ENCODE measurements at regions of chr6 and their contacts with region 1.

Region 1: DNA sequence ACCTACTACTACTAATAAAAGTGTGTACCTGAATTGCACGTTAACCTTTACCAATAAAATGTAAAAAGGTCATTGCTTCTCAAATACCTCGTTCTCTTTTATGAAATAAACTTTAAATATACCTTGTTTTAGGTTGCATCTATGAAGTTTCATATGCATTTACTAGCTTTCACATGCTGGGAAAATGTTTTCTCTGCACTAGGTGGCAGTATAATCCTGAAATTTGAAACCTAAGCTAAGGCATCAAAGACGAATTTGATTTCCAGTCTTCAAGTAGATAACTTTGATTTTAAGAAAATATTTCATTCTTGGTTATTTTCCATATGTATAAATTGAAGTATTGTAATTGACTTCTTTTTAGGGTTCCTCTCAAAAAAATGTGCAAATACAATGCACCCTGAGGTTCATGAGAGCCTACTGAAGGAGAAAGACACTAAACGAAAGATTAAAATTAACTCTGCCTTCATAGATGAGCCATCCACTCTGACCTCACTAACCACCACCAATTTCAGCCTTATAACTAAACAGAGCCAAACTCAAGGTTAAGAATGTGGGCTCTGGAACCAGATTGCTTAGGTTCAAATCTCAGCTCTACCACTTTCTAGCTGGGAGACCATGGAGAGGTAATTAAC is 7.3 kb upstream of the COL9A1 start:
- DNase-seq: peak; percentile 8
- H3K4me3 ChIP-seq: peak overlapping the region in 1 of 2 experiments; percentile 11; a peak in 1 of 4 replicates
- H3K27ac ChIP-seq: no peak overlapping the region
- H3K4me1 ChIP-seq: no peaks in the 10 kb centered on the region
- H3K27me3 ChIP-seq: peaks cover under 1% of the 10 kb centered on the region; the same call in 1 of the 2 replicates
- CTCF ChIP-seq: peak; percentile 83
- EP300 ChIP-seq: no peak
- RAD21 ChIP-seq: peak; percentile 82

Region 2: DNA sequence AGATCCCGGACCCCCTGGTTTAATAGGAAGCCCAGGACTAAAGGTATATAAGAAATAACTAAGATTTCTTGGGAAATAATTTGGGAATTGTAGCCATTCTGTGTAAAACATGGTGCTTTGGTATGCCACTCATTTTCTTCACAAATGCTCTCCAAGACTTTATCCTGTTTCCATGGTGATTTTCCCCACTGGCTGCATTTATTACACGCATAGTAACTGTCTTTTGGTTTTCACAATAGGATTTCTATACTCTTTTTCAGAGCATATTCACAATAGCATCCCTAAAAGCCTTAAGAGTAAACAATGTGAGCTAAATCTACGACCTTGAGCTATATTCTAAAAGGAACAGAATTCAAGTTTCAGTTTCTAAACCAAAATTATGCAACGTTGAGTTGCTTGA is 168.1 kb before region 1 on chr6:
- CTCF ChIA-PET with region 1: no interaction called
- POLR2A ChIA-PET with region 1: no interaction called
- DNase-seq: no peak
- H3K4me3 ChIP-seq: no peak overlapping the region
- H3K27ac ChIP-seq: no peak overlapping the region
- H3K4me1 ChIP-seq: no peaks in the 10 kb centered on the region
- H3K27me3 ChIP-seq: no peaks in the 10 kb centered on the region
- CTCF ChIP-seq: no peak
- EP300 ChIP-seq: no peak
- RAD21 ChIP-seq: no peak

Region 3: DNA sequence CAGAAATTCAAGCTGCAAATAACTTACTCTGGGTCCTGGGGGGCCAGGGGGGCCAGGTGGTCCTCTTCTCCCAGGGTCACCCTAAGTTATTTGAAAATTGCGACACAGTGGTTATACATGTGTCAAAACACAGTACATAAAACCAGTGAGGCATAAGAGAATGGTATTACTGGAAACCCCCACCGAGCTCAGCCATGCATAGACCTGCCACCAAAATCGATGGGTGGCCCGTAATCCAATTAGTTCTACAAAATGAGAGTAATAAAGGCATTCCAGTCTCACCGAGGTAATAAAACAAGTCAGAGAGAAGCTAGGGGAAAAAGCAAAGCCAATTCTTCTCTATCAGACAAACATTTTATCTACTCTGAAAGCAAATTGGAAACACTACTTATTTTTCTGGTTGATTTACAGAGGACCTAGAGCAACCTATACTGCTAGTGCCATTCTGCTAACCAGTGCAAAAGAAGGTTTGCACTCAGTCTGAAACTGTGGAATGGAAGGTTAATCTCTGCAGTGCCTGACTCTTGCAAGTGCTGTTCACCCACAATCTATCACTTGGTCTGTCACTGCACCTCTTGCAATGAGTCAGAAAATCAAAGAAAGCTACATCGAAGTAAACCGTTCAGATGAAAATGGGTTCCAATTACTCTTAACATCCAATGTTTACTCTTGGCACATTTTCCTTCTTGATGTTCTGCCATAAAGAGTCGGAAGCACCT is 39.7 kb before region 1 on chr6:
- CTCF ChIA-PET with region 1: interaction called, 13 read pairs
- POLR2A ChIA-PET with region 1: no interaction called
- DNase-seq: no peak
- H3K4me3 ChIP-seq: no peak overlapping the region
- H3K27ac ChIP-seq: no peak overlapping the region; a peak in 1 of 4 replicates
- H3K4me1 ChIP-seq: no peaks in the 10 kb centered on the region; a peak in 1 of 4 replicates
- H3K27me3 ChIP-seq: no peaks in the 10 kb centered on the region
- CTCF ChIP-seq: no peak
- EP300 ChIP-seq: no peak
- RAD21 ChIP-seq: no peak

Region 4: GRCh38 chr6:70299456-70299855 is 10.7 kb before region 1 on chr6:
- CTCF ChIA-PET with region 1: interaction called, 25 read pairs
- POLR2A ChIA-PET with region 1: no interaction called
- DNase-seq: no peak
- H3K4me3 ChIP-seq: no peak overlapping the region
- H3K27ac ChIP-seq: no peak overlapping the region
- H3K4me1 ChIP-seq: no peaks in the 10 kb centered on the region
- H3K27me3 ChIP-seq: no peaks in the 10 kb centered on the region; the same call in 1 of the 2 replicates
- CTCF ChIP-seq: no peak
- EP300 ChIP-seq: no peak
- RAD21 ChIP-seq: no peak

Region 5: GRCh38 chr6:70353343-70353913 is 43.2 kb after region 1 on chr6:
- CTCF ChIA-PET with region 1: interaction called, 15 read pairs
- POLR2A ChIA-PET with region 1: no interaction called
- DNase-seq: no peak
- H3K4me3 ChIP-seq: no peak overlapping the region
- H3K27ac ChIP-seq: no peak overlapping the region
- H3K4me1 ChIP-seq: peaks cover 0 to 4% of the 10 kb centered on the region in 2 experiments; a peak in 2 of 4 replicates
- H3K27me3 ChIP-seq: no peaks in the 10 kb centered on the region
- CTCF ChIP-seq: no peak
- EP300 ChIP-seq: no peak
- RAD21 ChIP-seq: no peak

Region 6: DNA sequence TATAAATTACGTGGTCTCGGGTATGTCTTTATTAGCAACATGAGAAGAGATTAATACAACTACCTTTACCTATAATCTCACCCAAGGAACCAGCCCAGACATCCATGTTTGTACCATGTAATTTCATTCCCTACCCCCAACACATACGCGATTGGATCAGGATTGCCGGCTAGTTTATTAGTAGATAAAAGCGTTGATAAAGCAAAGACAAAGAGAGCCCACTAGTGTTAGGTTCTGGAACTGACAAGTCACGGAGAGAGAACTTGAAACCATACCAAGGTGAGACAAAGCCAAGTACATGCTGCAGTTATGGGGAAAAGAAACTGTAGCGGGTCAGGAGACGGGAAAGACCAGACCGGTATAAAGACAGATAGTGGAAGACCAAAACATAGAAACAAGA is 65.7 kb after region 1 on chr6:
- CTCF ChIA-PET with region 1: interaction called, 321 read pairs
- POLR2A ChIA-PET with region 1: no interaction called
- DNase-seq: no peak
- H3K4me3 ChIP-seq: no peak overlapping the region
- H3K27ac ChIP-seq: no peak overlapping the region
- H3K4me1 ChIP-seq: no peaks in the 10 kb centered on the region; a peak in 1 of 4 replicates
- H3K27me3 ChIP-seq: no peaks in the 10 kb centered on the region; the same call in 1 of the 2 replicates
- CTCF ChIP-seq: peak; percentile 42
- EP300 ChIP-seq: no peak
- RAD21 ChIP-seq: no peak

Measured in SK-N-SH (cell line).